ENCODE measurements at regions of chr17 and their contacts with region 1.

Region 1: DNA sequence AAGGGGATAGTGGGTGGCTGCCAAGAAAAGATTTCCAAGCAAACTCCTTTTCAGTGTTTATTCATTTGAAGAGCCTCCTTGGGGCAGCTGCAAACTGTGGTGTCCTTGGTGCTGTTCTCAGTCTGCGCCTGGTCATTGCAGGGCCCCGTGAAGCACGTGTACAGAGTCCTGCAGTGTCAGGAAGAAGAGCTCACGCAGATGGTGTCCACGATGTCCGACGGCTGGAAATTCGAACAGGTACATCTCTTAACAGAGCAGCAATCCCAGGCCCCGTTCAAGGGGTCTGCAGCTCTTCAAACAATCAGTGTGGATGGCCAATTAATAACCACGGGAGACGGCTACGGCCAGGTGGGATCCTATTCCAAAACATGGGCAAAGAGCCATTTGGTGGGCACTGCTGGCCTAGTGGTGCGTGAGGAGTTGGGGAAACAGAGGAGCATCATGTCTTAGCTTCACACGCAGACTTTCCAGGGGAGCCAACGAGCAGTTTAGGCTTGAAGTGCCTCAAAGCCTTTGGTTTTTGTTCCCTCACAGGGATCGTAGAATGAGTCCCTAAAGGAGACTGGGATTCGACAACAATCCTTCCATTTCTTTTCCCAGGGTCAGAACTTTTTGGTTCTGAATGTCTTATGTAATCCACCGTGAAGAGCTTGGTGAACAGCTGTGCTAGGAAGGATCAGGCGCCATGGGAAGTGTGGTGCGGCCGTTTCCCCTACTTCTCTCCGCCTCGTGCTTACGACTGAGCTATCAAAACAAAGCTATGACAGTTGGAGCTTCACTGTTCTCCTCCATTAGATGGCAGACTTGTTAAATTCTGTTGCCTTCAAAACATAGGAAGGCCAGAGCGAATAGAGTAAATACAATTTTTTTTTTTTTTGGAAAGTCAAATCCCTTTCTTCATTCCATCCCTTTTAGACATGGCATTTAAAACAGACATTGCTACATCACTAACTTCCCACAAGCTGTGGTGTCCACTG is 12.6 kb downstream of the KCTD2 start:
- DNase-seq: no peak

Region 2: GRCh38 chr17:75131280-75132017 is 71.8 kb after region 1 on chr17 and contains the start of gene NT5C:
- intact Hi-C with region 1: loop called (anchors 2 kb)
- DNase-seq: peak; percentile 88
- total RNA-seq, gene NT5C: 27.7 TPM

Measured in cardiac septum (tissue), 1 donor.